Esophagus muscularis mucosa (tissue), 4 donors: ENCODE measurements at regions of chr18 and their contacts with region 1.

Region 1: DNA sequence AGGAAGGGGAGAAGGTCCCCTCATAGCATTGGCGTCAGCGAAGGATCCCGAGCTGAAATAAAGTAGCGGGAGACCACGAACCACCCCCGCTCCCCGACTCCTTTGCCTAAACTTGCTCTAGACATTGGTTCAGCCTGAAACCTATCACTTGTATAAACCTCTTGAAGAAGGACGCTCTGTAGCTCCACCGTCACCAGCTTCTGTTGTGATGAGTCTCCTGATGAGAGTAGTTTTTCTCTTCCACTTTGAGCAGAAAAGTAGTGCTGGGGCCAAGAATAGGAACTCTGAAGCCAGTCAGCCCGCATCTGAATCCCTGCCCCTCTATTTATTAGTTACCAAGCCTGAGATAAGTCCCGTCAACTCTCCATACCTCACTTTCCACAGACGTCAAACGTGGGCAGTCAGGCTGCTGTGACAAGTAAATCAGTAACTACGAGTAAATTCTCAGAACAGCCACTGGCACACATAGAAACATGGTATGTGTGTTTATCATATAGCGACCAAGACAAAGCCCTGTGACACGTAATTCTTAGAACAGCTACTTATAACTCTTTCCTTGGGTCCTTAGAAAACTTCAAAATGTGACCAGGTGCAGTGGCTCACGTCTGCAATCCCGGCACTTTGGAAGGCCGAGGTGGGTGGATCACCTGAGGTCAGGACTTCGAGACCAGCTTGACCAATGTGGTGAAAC is 61.7 kb downstream of the CD226 start:
- DNase-seq: no peak
- H3K4me3 ChIP-seq: no peak overlapping the region
- H3K27ac ChIP-seq: no peak overlapping the region
- H3K4me1 ChIP-seq: peaks cover 0 to 11% (median 8%) of the 10 kb centered on the region in 4 donors
- H3K27me3 ChIP-seq: no peaks in the 10 kb centered on the region
- CTCF ChIP-seq: no peak
- EP300 ChIP-seq: no peak
- POLR2A ChIP-seq: no peak

Region 2: GRCh38 chr18:69845593-69846506 is 40.1 kb before region 1 on chr18:
- intact Hi-C with region 1: loop called (anchors 5 kb)
- DNase-seq: no peak
- H3K4me3 ChIP-seq: no peak overlapping the region
- H3K27ac ChIP-seq: no peak overlapping the region
- H3K4me1 ChIP-seq: peaks cover 4 to 22% (median 15%) of the 10 kb centered on the region in 4 donors
- H3K27me3 ChIP-seq: no peaks in the 10 kb centered on the region
- CTCF ChIP-seq: no peak
- EP300 ChIP-seq: no peak
- POLR2A ChIP-seq: no peak